Activated CD4-positive, alpha-beta T cell treated with anti-CD3 and anti-CD28 coated beads for 36 hours (primary cell): ENCODE measurements at regions of chr15 and their contacts with region 1.

Region 1: GRCh38 chr15:59528965-59529402 is 82.6 kb upstream of the GCNT3 start:
- DNase-seq: peak; percentile 81
- ATAC-seq: peak; percentile 85
- H3K4me3 Mint-ChIP-seq: no peak overlapping the region
- H3K27ac Mint-ChIP-seq: no peak overlapping the region
- H3K4me1 Mint-ChIP-seq: peaks cover 11% of the 10 kb centered on the region
- H3K27me3 Mint-ChIP-seq: no peaks in the 10 kb centered on the region

Region 2: GRCh38 chr15:57866149-57866736 is 1662.7 kb before region 1 on chr15:
- CTCF ChIA-PET with region 1: no interaction called
- POLR2A ChIA-PET with region 1: no interaction called
- intact Hi-C with region 1: loop called in 1 of 2 experiments (anchors 5 kb)
- DNase-seq: peak; percentile 75
- ATAC-seq: no peak
- H3K4me3 Mint-ChIP-seq: no peak overlapping the region
- H3K27ac Mint-ChIP-seq: no peak overlapping the region
- H3K4me1 Mint-ChIP-seq: peaks cover 3% of the 10 kb centered on the region
- H3K27me3 Mint-ChIP-seq: peaks cover 24% of the 10 kb centered on the region

Region 3: GRCh38 chr15:58889363-58889762 is 639.6 kb before region 1 on chr15:
- CTCF ChIA-PET with region 1: no interaction called
- POLR2A ChIA-PET with region 1: no interaction called
- intact Hi-C with region 1: no loop called
- DNase-seq: no peak
- ATAC-seq: no peak
- H3K4me3 Mint-ChIP-seq: no peak overlapping the region
- H3K27ac Mint-ChIP-seq: peak overlapping the region; percentile 62
- H3K4me1 Mint-ChIP-seq: peaks cover 5% of the 10 kb centered on the region
- H3K27me3 Mint-ChIP-seq: no peaks in the 10 kb centered on the region

Region 4: GRCh38 chr15:58957101-58957973 is 571.6 kb before region 1 on chr15:
- CTCF ChIA-PET with region 1: interaction called, 11 read pairs
- POLR2A ChIA-PET with region 1: no interaction called
- intact Hi-C with region 1: loop called (anchors 1 kb)
- DNase-seq: peak; percentile 73
- ATAC-seq: peak; percentile 84
- H3K4me3 Mint-ChIP-seq: no peak overlapping the region
- H3K27ac Mint-ChIP-seq: no peak overlapping the region
- H3K4me1 Mint-ChIP-seq: peaks cover 10% of the 10 kb centered on the region
- H3K27me3 Mint-ChIP-seq: no peaks in the 10 kb centered on the region

Region 5: DNA sequence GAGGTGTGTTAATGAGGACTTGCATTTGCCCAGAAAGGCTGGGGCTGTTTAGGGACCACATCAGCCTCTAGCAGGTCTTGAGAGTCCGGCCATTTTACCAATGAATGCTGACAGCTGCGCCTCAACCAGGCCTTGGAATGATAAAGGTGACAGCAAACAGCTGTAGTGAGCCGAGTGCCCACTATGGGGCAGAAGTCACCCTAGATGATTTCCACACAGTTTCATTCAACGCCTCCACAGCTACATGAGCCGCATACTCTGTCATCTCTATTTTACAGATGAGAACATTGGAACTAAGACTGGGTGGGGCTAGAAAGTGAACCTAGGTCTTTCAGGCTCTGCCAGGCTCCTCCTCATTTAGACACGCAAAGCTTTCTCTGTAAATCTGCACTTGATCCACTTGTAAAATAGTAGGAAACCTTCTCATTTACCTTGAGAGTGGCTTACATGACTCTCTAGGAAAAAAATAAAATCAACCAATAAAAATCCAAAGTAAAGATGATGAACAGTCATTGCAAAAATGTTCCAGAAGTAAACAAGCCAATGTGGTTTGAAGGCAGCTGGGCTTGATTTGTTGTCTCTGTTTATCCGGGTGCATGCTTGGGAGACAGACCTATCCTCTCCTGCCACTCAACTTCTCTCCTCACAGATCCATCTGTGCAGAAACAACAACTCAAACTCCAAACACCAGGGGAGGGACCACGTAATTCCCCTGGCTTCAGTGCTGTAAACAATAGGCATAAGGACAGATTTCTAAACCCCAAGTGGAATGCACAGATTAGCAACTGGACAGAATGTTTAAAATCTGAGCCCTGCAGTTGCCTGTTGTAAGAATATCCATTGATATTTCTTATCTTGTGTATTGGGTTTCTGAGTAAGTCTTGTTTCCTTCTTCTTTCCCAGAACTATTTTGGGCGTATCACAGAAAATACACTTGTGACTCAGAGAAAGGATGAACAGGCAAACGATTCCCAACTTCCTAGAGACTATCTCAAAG is 353.9 kb before region 1 on chr15:
- CTCF ChIA-PET with region 1: interaction called, 4 read pairs
- POLR2A ChIA-PET with region 1: no interaction called
- intact Hi-C with region 1: loop called in 1 of 2 experiments (anchors 1 kb)
- DNase-seq: peak; percentile 72
- ATAC-seq: peak; percentile 95
- H3K4me3 Mint-ChIP-seq: no peak overlapping the region
- H3K27ac Mint-ChIP-seq: no peak overlapping the region
- H3K4me1 Mint-ChIP-seq: peaks cover 8% of the 10 kb centered on the region
- H3K27me3 Mint-ChIP-seq: peaks cover 17% of the 10 kb centered on the region

Region 6: GRCh38 chr15:59268168-59268979 is 260.6 kb before region 1 on chr15:
- CTCF ChIA-PET with region 1: no interaction called
- POLR2A ChIA-PET with region 1: no interaction called
- intact Hi-C with region 1: no loop called
- DNase-seq: no peak
- ATAC-seq: no peak
- H3K4me3 Mint-ChIP-seq: no peak overlapping the region
- H3K27ac Mint-ChIP-seq: no peak overlapping the region
- H3K4me1 Mint-ChIP-seq: no peaks in the 10 kb centered on the region
- H3K27me3 Mint-ChIP-seq: peaks cover 1% of the 10 kb centered on the region

Region 7: GRCh38 chr15:59492389-59493377 is 36.3 kb before region 1 on chr15:
- CTCF ChIA-PET with region 1: interaction called, 10 read pairs
- POLR2A ChIA-PET with region 1: no interaction called
- intact Hi-C with region 1: no loop called
- DNase-seq: peak; percentile 65
- ATAC-seq: peak; percentile 74
- H3K4me3 Mint-ChIP-seq: no peak overlapping the region
- H3K27ac Mint-ChIP-seq: no peak overlapping the region
- H3K4me1 Mint-ChIP-seq: no peaks in the 10 kb centered on the region
- H3K27me3 Mint-ChIP-seq: peaks cover 4% of the 10 kb centered on the region

Region 8: DNA sequence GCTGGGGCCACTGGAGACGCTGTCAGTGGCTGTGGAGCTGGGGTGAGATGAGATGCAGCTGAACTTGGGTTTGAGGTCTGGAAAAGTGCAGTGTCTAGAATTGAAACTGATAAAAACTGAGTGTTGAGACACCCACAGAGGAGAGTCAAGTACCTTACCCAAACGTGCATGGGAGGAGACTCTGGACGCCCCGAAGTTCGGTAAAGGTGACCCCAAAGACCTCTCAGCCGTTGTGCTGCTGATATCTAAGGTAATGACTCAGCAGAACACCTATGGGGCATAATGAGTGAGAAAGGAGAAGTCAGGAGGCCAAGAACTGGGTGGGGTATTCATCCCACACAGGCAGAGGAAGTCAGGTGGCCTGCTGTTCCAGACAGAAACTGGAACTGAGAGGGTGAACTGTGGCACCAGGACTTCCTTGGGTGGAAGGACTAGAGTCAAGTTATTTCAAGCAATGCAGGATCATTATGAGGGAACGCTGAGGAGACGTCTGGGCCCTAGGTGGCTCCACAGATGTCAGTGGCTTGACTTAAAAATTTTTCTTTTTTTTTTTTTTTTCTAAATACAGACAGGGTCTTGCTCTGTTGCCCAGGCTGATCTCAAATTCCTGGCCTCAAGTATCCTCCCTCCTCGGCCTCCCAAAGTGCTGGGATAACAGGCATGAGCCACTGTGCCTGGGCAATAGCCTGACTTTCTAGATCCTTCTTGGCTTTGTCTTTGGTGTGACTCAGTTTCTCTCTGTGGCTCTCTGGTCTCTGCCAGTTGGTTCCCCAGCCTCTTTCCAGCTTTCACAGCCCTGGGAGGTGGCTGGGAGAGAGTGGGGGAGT is 14.9 kb after region 1 on chr15:
- CTCF ChIA-PET with region 1: interaction called, 11 read pairs
- POLR2A ChIA-PET with region 1: no interaction called
- intact Hi-C with region 1: no loop called
- DNase-seq: peak; percentile 29
- ATAC-seq: peak; percentile 64
- H3K4me3 Mint-ChIP-seq: peak overlapping the region; percentile 2
- H3K27ac Mint-ChIP-seq: peak overlapping the region; percentile 59
- H3K4me1 Mint-ChIP-seq: peaks cover 8% of the 10 kb centered on the region
- H3K27me3 Mint-ChIP-seq: peaks cover 11% of the 10 kb centered on the region

Region 9: GRCh38 chr15:59636184-59636583 is 107.2 kb after region 1 on chr15:
- CTCF ChIA-PET with region 1: interaction called, 10 read pairs
- POLR2A ChIA-PET with region 1: no interaction called
- intact Hi-C with region 1: loop called (anchors 5 kb)
- DNase-seq: no peak
- ATAC-seq: no peak
- H3K4me3 Mint-ChIP-seq: no peak overlapping the region
- H3K27ac Mint-ChIP-seq: no peak overlapping the region
- H3K4me1 Mint-ChIP-seq: peaks cover 6% of the 10 kb centered on the region
- H3K27me3 Mint-ChIP-seq: no peaks in the 10 kb centered on the region